ENCODE measurements at regions of chr11 and their contacts with region 1.

Region 1: GRCh38 chr11:62726915-62727763 is at the start of gene HNRNPUL2:
- DNase-seq: peak; percentile 99
- H3K4me3 ChIP-seq: peak within 1 kb of the TSS; percentile 71 to 99 (median 94)
- H3K27ac ChIP-seq: peak within 1 kb of the TSS; percentile 67
- H3K4me1 ChIP-seq: peaks cover 15% of the 10 kb centered on the region
- H3K27me3 ChIP-seq: no peaks in the 10 kb centered on the region
- CTCF ChIP-seq: no peak
- POLR2A ChIP-seq: peak; percentile 92
- total RNA-seq, gene HNRNPUL2: 53.4 and 56.2 TPM in 2 replicates

Region 2: DNA sequence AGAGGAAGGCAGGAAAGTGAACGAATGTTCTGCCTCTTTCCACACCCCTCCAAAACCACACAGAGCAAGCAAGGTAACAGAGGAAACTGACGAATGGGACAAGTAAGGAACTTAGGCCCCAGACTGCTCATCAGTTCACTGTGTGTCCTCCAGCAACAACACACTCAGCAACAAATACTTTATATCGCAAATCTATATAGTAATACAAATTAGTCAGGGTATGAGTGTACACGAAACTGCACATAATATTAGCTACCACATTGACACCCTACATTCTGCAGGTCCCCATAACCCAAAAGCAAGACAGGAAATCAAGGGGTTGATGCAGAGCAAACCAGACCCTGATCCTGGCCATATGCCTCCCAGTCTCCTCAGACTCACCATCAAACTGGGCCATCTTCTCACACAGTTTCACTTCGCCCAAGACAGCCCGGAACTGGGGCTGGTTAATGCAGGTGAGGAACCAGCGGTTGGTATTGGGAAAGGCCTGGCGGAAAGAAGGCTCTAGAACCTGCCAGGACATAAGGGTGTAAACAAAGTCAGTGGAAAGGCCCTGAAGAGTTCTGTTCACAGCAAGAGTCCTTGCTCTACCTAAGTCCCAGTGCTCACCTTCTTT is 160.0 kb before region 1 on chr11:
- CTCF ChIA-PET with region 1: no interaction called
- POLR2A ChIA-PET with region 1: no interaction called
- dilution Hi-C with region 1: no loop called
- intact Hi-C with region 1: no loop called
- DNase-seq: no peak
- H3K4me3 ChIP-seq: no peak overlapping the region
- H3K27ac ChIP-seq: no peak overlapping the region
- H3K4me1 ChIP-seq: peaks cover 15% of the 10 kb centered on the region
- H3K27me3 ChIP-seq: no peaks in the 10 kb centered on the region
- CTCF ChIP-seq: no peak
- POLR2A ChIP-seq: no peak

Region 3: DNA sequence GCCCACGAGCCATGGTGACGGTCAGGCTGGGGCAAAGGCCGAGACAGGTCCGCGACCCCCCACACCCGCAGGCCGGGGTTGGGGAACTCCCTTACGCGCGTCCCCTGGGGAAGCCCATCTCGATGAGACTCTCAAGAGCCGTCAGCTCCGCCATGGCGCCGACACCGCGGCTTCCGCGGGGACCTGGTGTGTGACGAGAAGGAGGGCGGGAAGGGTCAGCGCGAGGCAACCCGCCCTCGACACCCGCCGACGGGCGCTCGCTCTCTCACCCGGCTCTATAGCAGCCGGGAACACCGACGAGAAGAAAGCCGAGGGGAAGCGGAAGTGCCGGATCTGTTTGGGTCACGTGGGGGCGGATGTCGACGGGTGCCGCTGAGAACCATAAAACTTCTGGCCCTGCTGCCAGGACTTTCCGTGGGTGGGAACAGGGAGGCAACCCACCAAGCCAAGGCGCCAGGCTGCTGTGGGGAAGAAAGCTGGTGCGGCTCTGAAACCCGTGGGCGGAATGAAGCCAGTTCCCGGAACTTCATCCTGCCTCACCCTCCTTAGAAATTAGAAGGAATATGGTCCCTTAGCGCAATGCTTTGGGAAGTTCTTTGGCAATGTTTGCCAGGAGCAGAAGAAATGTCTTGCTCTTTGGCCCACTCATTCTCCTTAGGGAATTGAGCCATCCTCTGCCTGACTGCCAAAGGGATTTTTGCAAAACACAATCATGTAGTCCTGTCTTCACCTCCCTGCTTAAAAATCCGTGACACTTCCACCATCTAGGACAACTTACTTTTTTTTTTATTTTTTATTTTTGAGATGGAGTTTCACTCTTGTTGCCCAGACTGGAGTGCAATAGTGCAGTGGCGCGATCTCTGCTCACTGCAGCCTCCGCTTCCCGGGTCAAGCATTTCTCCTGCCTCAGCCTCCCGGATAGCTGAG is 48.1 kb before region 1 on chr11 and contains the start of gene UBXN1:
- CTCF ChIA-PET with region 1: interaction called, 3 read pairs
- POLR2A ChIA-PET with region 1: interaction called, 8 read pairs
- dilution Hi-C with region 1: no loop called
- intact Hi-C with region 1: loop called (anchors 1 kb)
- DNase-seq: peak; percentile 89
- H3K4me3 ChIP-seq: peak within 1 kb of the TSS; percentile 76 to 93 (median 79)
- H3K27ac ChIP-seq: peak within 1 kb of the TSS; percentile 74
- H3K4me1 ChIP-seq: peaks cover 11% of the 10 kb centered on the region
- H3K27me3 ChIP-seq: no peaks in the 10 kb centered on the region
- CTCF ChIP-seq: no peak
- POLR2A ChIP-seq: peak; percentile 84
- total RNA-seq, gene UBXN1: 112 and 113 TPM in 2 replicates

Region 4: GRCh38 chr11:62753736-62754603 is 26.8 kb after region 1 on chr11 and contains the start of gene ZBTB3:
- CTCF ChIA-PET with region 1: interaction called, 11 read pairs
- POLR2A ChIA-PET with region 1: interaction called, 12 read pairs
- dilution Hi-C with region 1: no loop called
- intact Hi-C with region 1: loop called (anchors 1 kb)
- DNase-seq: peak; percentile 100
- H3K4me3 ChIP-seq: peak within 1 kb of the TSS; percentile 32 to 71 (median 67)
- H3K27ac ChIP-seq: peak within 1 kb of the TSS; percentile 61
- H3K4me1 ChIP-seq: peaks cover 5% of the 10 kb centered on the region
- H3K27me3 ChIP-seq: no peaks in the 10 kb centered on the region
- CTCF ChIP-seq: no peak
- POLR2A ChIP-seq: peak; percentile 75
- total RNA-seq, gene ZBTB3: 6.9 and 8.1 TPM in 2 replicates

Region 5: GRCh38 chr11:62860835-62861563 is 133.9 kb after region 1 on chr11:
- CTCF ChIA-PET with region 1: interaction called, 3 read pairs
- POLR2A ChIA-PET with region 1: interaction called, 7 read pairs
- dilution Hi-C with region 1: no loop called
- intact Hi-C with region 1: loop called (anchors 2 kb)
- DNase-seq: no peak
- H3K4me3 ChIP-seq: no peak overlapping the region
- H3K27ac ChIP-seq: no peak overlapping the region
- H3K4me1 ChIP-seq: peaks cover 6% of the 10 kb centered on the region
- H3K27me3 ChIP-seq: no peaks in the 10 kb centered on the region
- CTCF ChIP-seq: no peak
- POLR2A ChIP-seq: no peak